ENCODE measurements at regions of chr1 and their contacts with region 1.

Region 1: DNA sequence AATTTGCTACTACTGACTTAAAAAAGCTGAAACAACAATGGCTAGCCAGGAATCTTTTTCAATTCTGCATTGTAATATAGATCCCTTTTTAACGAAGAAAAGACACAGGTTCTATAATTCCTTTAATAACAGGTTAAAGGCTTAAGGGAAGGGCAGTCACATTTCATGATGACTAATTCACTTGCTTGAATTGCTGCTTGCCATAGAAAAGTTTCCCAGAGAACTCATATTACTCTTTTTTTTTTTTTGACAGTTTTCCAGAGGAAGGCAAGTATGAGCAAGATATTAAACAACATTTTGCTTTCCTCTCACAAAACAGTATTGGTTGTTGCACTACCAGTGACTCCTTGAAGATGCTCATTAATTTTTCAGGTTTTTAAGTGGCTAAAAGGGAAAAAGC is 60.9 kb downstream of the IL23R start:
- DNase-seq: no peak
- ATAC-seq: no peak
- H3K4me3 ChIP-seq: no peak overlapping the region
- H3K27ac ChIP-seq: no peak overlapping the region
- H3K4me1 ChIP-seq: no peaks in the 10 kb centered on the region
- H3K27me3 ChIP-seq: peaks cover 0 to 3% (median 0%) of the 10 kb centered on the region in 3 donors
- CTCF ChIP-seq: no peak

Region 2: DNA sequence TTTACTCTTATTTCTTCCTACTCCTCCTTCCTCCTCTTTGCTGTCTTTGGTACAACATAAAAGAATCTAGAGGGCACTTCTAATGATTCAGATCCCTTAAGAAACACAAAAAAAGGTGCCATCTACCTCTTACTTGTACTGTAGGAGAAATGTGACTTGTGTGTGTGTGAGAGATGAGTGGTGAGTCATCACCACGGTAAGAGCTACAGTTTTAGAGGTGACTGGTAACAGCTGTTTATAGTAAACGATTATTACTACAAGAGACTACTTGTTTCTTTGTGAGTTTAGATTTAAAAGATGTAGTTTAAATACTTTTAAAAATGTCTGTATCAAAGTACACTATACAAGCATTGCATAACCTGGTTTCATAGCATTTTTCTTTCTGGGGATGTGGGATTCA is 213.6 kb before region 1 on chr1:
- intact Hi-C with region 1: no loop called
- DNase-seq: no peak
- ATAC-seq: peak; percentile 83 to 93 (median 84)
- H3K4me3 ChIP-seq: no peak overlapping the region
- H3K27ac ChIP-seq: peak overlapping the region; percentile 64
- H3K4me1 ChIP-seq: peaks cover 10% of the 10 kb centered on the region
- H3K27me3 ChIP-seq: no peaks in the 10 kb centered on the region
- CTCF ChIP-seq: no peak

Region 3: GRCh38 chr1:67189953-67190352 is 37.2 kb before region 1 on chr1:
- intact Hi-C with region 1: no loop called
- DNase-seq: no peak
- ATAC-seq: no peak
- H3K4me3 ChIP-seq: no peak overlapping the region
- H3K27ac ChIP-seq: no peak overlapping the region
- H3K4me1 ChIP-seq: no peaks in the 10 kb centered on the region
- H3K27me3 ChIP-seq: no peaks in the 10 kb centered on the region
- CTCF ChIP-seq: no peak

Region 4: GRCh38 chr1:67201891-67202290 is 25.3 kb before region 1 on chr1:
- intact Hi-C with region 1: loop called in 1 of 2 experiments (anchors 2 kb)
- DNase-seq: no peak
- ATAC-seq: no peak
- H3K4me3 ChIP-seq: no peak overlapping the region
- H3K27ac ChIP-seq: no peak overlapping the region
- H3K4me1 ChIP-seq: no peaks in the 10 kb centered on the region
- H3K27me3 ChIP-seq: no peaks in the 10 kb centered on the region
- CTCF ChIP-seq: no peak

Region 5: GRCh38 chr1:67307251-67308060 is 80.3 kb after region 1 on chr1 and contains the start of gene IL12RB2:
- intact Hi-C with region 1: loop called in 1 of 2 experiments (anchors 10 kb)
- DNase-seq: peak; percentile 23 to 65
- ATAC-seq: peak; percentile 81 to 93 (median 87)
- H3K4me3 ChIP-seq: peak within 1 kb of the TSS; percentile 72
- H3K27ac ChIP-seq: peak within 1 kb of the TSS; percentile 60
- H3K4me1 ChIP-seq: no peaks in the 10 kb centered on the region
- H3K27me3 ChIP-seq: peaks cover 0 to 2% (median 0%) of the 10 kb centered on the region in 3 donors
- CTCF ChIP-seq: no peak
- total RNA-seq, gene IL12RB2: 2.0 to 9.5 (median 5.1) TPM

Region 6: GRCh38 chr1:67347688-67348472 is 120.7 kb after region 1 on chr1:
- intact Hi-C with region 1: loop called in 1 of 2 experiments (anchors 10 kb)
- DNase-seq: peak in 1 of 2 donors; percentile 27
- ATAC-seq: peak; percentile 82 to 97 (median 89)
- H3K4me3 ChIP-seq: no peak overlapping the region
- H3K27ac ChIP-seq: no peak overlapping the region
- H3K4me1 ChIP-seq: peaks cover 4% of the 10 kb centered on the region
- H3K27me3 ChIP-seq: no peaks in the 10 kb centered on the region
- CTCF ChIP-seq: peak; percentile 85

Region 7: GRCh38 chr1:67814121-67814772 is 587.1 kb after region 1 on chr1:
- intact Hi-C with region 1: no loop called
- DNase-seq: no peak
- ATAC-seq: peak in 1 of 4 donors; percentile 42
- H3K4me3 ChIP-seq: no peak overlapping the region
- H3K27ac ChIP-seq: peak overlapping the region; percentile 38
- H3K4me1 ChIP-seq: peaks cover 26% of the 10 kb centered on the region
- H3K27me3 ChIP-seq: no peaks in the 10 kb centered on the region
- CTCF ChIP-seq: no peak